Activated T-helper 2 cell treated with anti-CD3 and anti-CD28 coated beads, Interferon-gamma antibody, Interleukin-2, Interleukin-4, amounts not matched to agents 10 μg/mL and 5 μg/mL and 100 μg/mL, durations not matched to agents 14 hours and 24 hours and 36 hours (primary cell): ENCODE measurements at regions of chr16 and their contacts with region 1.

Region 1: DNA sequence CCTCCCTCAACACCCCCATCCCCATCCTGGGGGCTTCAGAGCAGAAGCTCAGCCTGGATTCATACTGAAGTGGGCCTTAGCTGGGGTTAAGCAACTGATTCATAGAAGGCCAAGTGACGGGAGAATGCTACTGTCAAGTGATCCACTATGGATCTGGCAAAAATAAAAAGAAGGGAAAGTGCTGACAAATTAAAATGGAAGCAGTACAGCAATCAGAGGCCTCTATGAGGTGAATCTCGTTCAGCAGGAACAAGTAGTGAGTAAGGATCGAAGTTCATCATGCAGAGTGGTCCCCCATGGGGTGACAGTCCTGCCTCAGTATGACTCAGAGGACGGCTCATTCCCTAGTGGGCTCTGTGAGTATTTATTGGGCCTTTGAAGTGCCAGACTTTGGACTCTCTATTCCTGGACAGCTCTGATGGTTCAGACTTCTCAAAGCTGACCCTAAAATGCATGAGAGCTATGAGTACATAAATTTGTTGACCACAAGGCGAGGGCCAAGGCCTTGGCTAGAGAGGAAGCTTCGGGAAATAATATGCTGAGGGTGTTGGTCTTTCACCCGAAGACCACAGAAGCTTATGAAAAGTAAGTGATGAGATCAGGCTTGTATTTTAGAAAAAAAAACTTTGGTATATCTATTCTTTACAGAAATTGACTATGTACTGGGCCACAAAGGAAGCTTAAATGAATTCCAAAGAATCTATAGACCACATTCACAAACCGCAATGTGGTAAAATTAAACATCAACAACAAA is 5.3 kb upstream of the NSMCE1 start:
- DNase-seq: peak; percentile 53
- H3K4me3 Mint-ChIP-seq: peak overlapping the region; percentile 51
- H3K27ac Mint-ChIP-seq: peak overlapping the region; percentile 98
- H3K4me1 Mint-ChIP-seq: peaks cover 64% of the 10 kb centered on the region
- H3K27me3 Mint-ChIP-seq: no peaks in the 10 kb centered on the region

Region 2: GRCh38 chr16:26987597-26988010 is 286.2 kb before region 1 on chr16:
- intact Hi-C with region 1: no loop called
- DNase-seq: no peak
- H3K4me3 Mint-ChIP-seq: no peak overlapping the region
- H3K27ac Mint-ChIP-seq: no peak overlapping the region
- H3K4me1 Mint-ChIP-seq: no peaks in the 10 kb centered on the region
- H3K27me3 Mint-ChIP-seq: peaks cover 6% of the 10 kb centered on the region

Region 3: DNA sequence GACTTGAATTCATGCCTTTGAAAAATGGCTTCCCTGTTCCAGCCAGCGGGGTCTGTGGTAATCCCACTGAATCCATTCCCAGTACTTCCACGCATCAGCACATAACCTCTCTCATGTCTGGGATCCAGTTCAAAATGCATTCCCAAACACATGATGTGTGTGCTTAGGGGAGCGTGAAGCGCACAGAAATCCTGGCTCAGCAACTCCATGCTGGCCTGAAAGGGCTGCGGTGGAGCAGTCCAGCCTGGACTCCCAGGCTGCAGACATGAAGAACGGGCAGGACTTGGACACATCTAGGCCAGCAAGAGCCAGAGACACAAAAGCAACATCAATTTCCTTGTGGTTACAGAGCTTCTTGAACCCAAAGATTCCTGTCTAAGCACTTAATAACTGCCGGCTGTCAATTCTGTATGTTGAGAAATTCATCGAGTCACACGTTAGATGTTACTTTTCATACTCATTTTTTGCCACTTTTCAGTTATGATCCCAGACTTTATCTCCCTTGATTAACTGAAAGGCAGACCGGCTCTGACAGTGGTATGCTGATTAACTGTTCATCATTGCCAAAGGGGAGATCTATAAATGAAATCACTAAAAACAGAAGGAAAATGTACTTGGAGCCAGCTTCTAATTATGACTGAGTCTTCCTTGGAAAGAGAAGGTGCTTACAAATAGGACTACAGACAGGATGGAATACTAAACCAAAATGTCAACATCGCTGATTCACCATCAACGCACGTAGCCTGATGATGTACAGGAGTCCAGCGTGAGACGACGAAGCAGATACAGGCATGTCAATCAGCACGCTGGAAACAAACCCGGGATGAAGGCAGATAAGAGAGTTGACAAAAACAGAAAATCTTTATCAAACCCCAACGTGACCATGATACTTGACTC is 28.3 kb before region 1 on chr16:
- intact Hi-C with region 1: loop called (anchors 2 kb)
- DNase-seq: peak; percentile 69
- H3K4me3 Mint-ChIP-seq: peak overlapping the region; percentile 3
- H3K27ac Mint-ChIP-seq: peak overlapping the region; percentile 91
- H3K4me1 Mint-ChIP-seq: peaks cover 90% of the 10 kb centered on the region
- H3K27me3 Mint-ChIP-seq: no peaks in the 10 kb centered on the region

Region 4: DNA sequence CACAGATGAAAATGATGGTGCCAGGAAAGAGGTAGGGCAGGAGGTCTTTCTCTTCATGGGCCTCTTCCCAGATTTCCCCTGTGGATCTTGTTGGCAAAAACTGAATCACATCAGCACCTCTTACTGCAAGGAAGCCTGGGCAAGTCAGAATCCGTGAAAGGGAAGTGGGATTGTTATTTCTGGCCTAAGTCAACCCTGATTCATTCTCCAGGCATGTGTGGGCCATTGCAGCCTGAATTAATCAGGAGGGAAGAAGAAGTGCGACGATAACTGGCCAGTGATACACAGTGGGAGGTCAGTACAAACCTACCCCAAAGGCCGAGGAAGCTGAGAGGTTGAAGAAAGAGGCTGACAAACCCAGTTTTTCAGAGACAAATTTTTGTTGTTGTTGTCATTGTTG is 12.6 kb after region 1 on chr16:
- intact Hi-C with region 1: loop called (anchors 1 kb)
- DNase-seq: no peak
- H3K4me3 Mint-ChIP-seq: no peak overlapping the region
- H3K27ac Mint-ChIP-seq: peak overlapping the region; percentile 93
- H3K4me1 Mint-ChIP-seq: peaks cover 79% of the 10 kb centered on the region
- H3K27me3 Mint-ChIP-seq: no peaks in the 10 kb centered on the region

Region 5: GRCh38 chr16:27313422-27314160 is 39.7 kb after region 1 on chr16 and contains the start of gene IL4R:
- intact Hi-C with region 1: loop called (anchors 1 kb)
- DNase-seq: peak; percentile 67
- H3K4me3 Mint-ChIP-seq: peak within 1 kb of the TSS; percentile 100
- H3K27ac Mint-ChIP-seq: peak within 1 kb of the TSS; percentile 98
- H3K4me1 Mint-ChIP-seq: peaks cover 43% of the 10 kb centered on the region
- H3K27me3 Mint-ChIP-seq: no peaks in the 10 kb centered on the region
- total RNA-seq, gene IL4R: 434 and 437 TPM in 2 replicates